CD4-positive, alpha-beta T cell (primary cell): ENCODE measurements at regions of chr5 and their contacts with region 1.

Region 1: DNA sequence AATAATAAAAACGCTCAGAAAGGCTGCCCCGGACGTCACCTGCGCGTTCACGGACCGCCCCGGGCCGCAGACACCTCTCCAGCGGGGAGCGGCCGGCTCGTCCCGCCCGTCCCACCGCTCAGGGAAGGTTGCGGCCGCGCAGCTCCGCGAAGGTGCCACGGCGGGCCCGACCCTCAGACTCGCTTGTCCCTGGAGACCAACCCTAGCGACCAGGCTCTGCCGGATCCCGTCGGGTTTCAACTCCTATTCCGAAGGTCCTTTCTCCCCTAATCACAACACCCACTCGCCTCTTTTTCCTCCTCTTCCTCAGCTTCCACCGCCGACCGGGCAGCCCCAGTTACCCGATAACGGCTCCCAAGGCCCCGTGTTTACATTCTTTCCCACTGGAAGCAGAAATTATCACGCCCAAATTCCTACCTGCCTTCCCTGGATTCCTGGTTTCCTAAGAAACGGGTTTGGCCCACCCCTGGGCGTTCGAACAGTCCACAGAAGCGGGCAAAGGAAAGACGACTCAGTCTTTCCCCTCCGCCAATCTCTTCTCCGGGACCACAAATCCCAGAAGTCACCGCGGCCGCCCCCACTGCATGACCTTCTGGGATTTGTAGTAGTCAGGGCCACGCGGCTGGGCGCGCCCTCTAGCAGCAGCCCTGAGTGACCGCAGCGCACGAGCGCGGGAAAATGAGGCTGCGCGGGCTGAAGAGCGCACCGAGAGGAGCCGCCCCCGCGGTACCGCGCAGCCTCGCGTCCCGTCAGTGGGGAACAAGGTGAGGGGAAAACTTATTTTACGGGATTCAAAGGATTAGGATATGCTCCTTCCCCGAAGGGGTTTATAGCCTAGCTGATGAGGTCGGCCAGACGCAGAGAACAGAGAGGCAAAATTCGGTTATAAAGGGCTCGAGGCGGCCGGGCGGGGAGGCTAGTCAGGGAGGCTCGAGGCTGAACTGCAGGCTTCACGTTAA is at the start of gene TTC33:
- DNase-seq: peak; percentile 86 to 96 (median 92)
- ATAC-seq: peak; percentile 80
- H3K4me3 ChIP-seq: peak within 1 kb of the TSS; percentile 89
- H3K4me3 Mint-ChIP-seq: no peak within 1 kb of the TSS
- H3K27ac ChIP-seq: peak within 1 kb of the TSS; percentile 87 to 89
- H3K27ac Mint-ChIP-seq: no peak within 1 kb of the TSS
- H3K4me1 ChIP-seq: peaks cover 14% of the 10 kb centered on the region
- H3K4me1 Mint-ChIP-seq: peaks cover 25% of the 10 kb centered on the region
- H3K27me3 ChIP-seq: no peaks in the 10 kb centered on the region
- H3K27me3 Mint-ChIP-seq: no peaks in the 10 kb centered on the region
- CTCF ChIP-seq: peak; percentile 51
- total RNA-seq, gene TTC33: 8.7 to 12.0 TPM

Region 2: DNA sequence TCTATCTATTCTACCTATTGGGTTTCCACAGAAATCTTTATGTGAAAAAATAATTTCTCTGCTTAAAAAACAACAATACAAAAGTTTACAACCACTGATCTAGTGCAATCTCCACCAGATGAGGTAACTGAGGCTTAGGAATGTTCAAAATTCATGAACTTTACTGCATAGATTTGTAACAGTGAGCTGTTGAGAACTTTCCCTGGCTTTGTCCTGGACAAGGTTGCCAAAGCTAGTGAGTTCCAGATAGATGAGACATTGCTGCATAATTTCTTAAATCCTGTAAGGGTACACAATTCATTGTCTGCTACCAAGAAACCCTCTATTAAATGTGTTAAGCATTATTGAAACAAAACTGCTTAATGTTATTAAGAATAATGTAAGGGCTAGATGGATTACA is 1807.2 kb before region 1 on chr5:
- CTCF ChIA-PET with region 1: no interaction called
- POLR2A ChIA-PET with region 1: no interaction called
- intact Hi-C with region 1: loop called in 1 of 2 experiments (anchors 10 kb)
- DNase-seq: no peak
- ATAC-seq: no peak
- H3K4me3 ChIP-seq: no peak overlapping the region
- H3K4me3 Mint-ChIP-seq: no peak overlapping the region
- H3K27ac ChIP-seq: no peak overlapping the region
- H3K27ac Mint-ChIP-seq: no peak overlapping the region
- H3K4me1 ChIP-seq: no peaks in the 10 kb centered on the region
- H3K4me1 Mint-ChIP-seq: no peaks in the 10 kb centered on the region
- H3K27me3 ChIP-seq: no peaks in the 10 kb centered on the region
- H3K27me3 Mint-ChIP-seq: no peaks in the 10 kb centered on the region
- CTCF ChIP-seq: no peak

Region 3: GRCh38 chr5:40781843-40782409 is 26.2 kb after region 1 on chr5:
- CTCF ChIA-PET with region 1: no interaction called
- POLR2A ChIA-PET with region 1: no interaction called
- intact Hi-C with region 1: no loop called
- DNase-seq: no peak
- ATAC-seq: no peak
- H3K4me3 ChIP-seq: no peak overlapping the region
- H3K4me3 Mint-ChIP-seq: no peak overlapping the region
- H3K27ac ChIP-seq: no peak overlapping the region
- H3K27ac Mint-ChIP-seq: no peak overlapping the region
- H3K4me1 ChIP-seq: peaks cover 22% of the 10 kb centered on the region
- H3K4me1 Mint-ChIP-seq: peaks cover 71% of the 10 kb centered on the region
- H3K27me3 ChIP-seq: no peaks in the 10 kb centered on the region
- H3K27me3 Mint-ChIP-seq: no peaks in the 10 kb centered on the region
- CTCF ChIP-seq: no peak

Region 4: GRCh38 chr5:40798012-40798855 is 42.5 kb after region 1 on chr5 and contains the start of gene PRKAA1:
- CTCF ChIA-PET with region 1: interaction called, 6 read pairs
- POLR2A ChIA-PET with region 1: interaction called, 3 read pairs
- intact Hi-C with region 1: loop called (anchors 1 kb)
- DNase-seq: peak; percentile 80 to 96 (median 89)
- ATAC-seq: peak; percentile 93
- H3K4me3 ChIP-seq: peak within 1 kb of the TSS; percentile 95
- H3K4me3 Mint-ChIP-seq: peak within 1 kb of the TSS; percentile 94
- H3K27ac ChIP-seq: peak within 1 kb of the TSS; percentile 84 to 90
- H3K27ac Mint-ChIP-seq: peak within 1 kb of the TSS; percentile 85
- H3K4me1 ChIP-seq: peaks cover 16% of the 10 kb centered on the region
- H3K4me1 Mint-ChIP-seq: peaks cover 48% of the 10 kb centered on the region
- H3K27me3 ChIP-seq: no peaks in the 10 kb centered on the region
- H3K27me3 Mint-ChIP-seq: no peaks in the 10 kb centered on the region
- CTCF ChIP-seq: peak; percentile 71
- total RNA-seq, gene PRKAA1: 102 to 105 TPM